Tibial artery (tissue), 4 donors: ENCODE measurements at regions of chr13 and their contacts with region 1.

Region 1: GRCh38 chr13:33542283-33543088 is 256.9 kb upstream of the STARD13 start:
- DNase-seq: peak; percentile 98 to 99
- H3K4me3 ChIP-seq: peak overlapping the region; percentile 55 to 62
- H3K27ac ChIP-seq: peak overlapping the region; percentile 92 to 96
- H3K4me1 ChIP-seq: peaks cover 0 to 46% (median 20%) of the 10 kb centered on the region in 4 donors
- H3K27me3 ChIP-seq: no peaks in the 10 kb centered on the region
- CTCF ChIP-seq: peak; percentile 87 to 88

Region 2: GRCh38 chr13:33228648-33229445 is 313.6 kb before region 1 on chr13:
- intact Hi-C with region 1: loop called (anchors 10 kb)
- DNase-seq: no peak
- H3K4me3 ChIP-seq: no peak overlapping the region
- H3K27ac ChIP-seq: peak overlapping the region in 1 of 2 donors; percentile 13
- H3K4me1 ChIP-seq: peaks cover 0 to 41% (median 18%) of the 10 kb centered on the region in 4 donors
- H3K27me3 ChIP-seq: no peaks in the 10 kb centered on the region
- CTCF ChIP-seq: peak; percentile 83 to 89

Region 3: GRCh38 chr13:33349986-33350826 is 192.3 kb before region 1 on chr13:
- intact Hi-C with region 1: loop called (anchors 10 kb)
- DNase-seq: peak; percentile 59 to 82
- H3K4me3 ChIP-seq: peak overlapping the region; percentile 82 to 93
- H3K27ac ChIP-seq: peak overlapping the region; percentile 91 to 96
- H3K4me1 ChIP-seq: peaks cover 0 to 37% (median 18%) of the 10 kb centered on the region in 4 donors
- H3K27me3 ChIP-seq: no peaks in the 10 kb centered on the region
- CTCF ChIP-seq: no peak

Region 4: GRCh38 chr13:33497146-33497845 is 45.2 kb before region 1 on chr13:
- intact Hi-C with region 1: no loop called
- DNase-seq: no peak
- H3K4me3 ChIP-seq: no peak overlapping the region
- H3K27ac ChIP-seq: peak overlapping the region; percentile 17 to 54
- H3K4me1 ChIP-seq: peaks cover 0 to 35% (median 6%) of the 10 kb centered on the region in 4 donors
- H3K27me3 ChIP-seq: no peaks in the 10 kb centered on the region
- CTCF ChIP-seq: no peak

Region 5: GRCh38 chr13:33524086-33524485 is 18.4 kb before region 1 on chr13:
- intact Hi-C with region 1: no loop called
- DNase-seq: no peak
- H3K4me3 ChIP-seq: no peak overlapping the region
- H3K27ac ChIP-seq: peak overlapping the region in 1 of 2 donors; percentile 55
- H3K4me1 ChIP-seq: peaks cover 0 to 58% (median 7%) of the 10 kb centered on the region in 4 donors
- H3K27me3 ChIP-seq: no peaks in the 10 kb centered on the region
- CTCF ChIP-seq: no peak

Region 6: GRCh38 chr13:33723772-33724435 is 181.4 kb after region 1 on chr13:
- intact Hi-C with region 1: loop called (anchors 10 kb)
- DNase-seq: peak; percentile 82 to 84
- H3K4me3 ChIP-seq: no peak overlapping the region
- H3K27ac ChIP-seq: peak overlapping the region; percentile 47 to 62
- H3K4me1 ChIP-seq: peaks cover 0 to 25% (median 15%) of the 10 kb centered on the region in 4 donors
- H3K27me3 ChIP-seq: no peaks in the 10 kb centered on the region
- CTCF ChIP-seq: peak; percentile 64 to 70